KBM-7 (cell line): ENCODE measurements at regions of chr16 and their contacts with region 1.

Region 1: GRCh38 chr16:86519649-86520316 is 9.5 kb downstream of the FOXF1 start:
- DNase-seq: peak; percentile 56

Region 2: GRCh38 chr16:85799497-85800337 is 720.1 kb before region 1 on chr16 and contains the starts of genes COX4I1 and EMC8:
- in situ Hi-C with region 1: loop called (anchors 25 kb)
- DNase-seq: peak; percentile 91

Region 3: GRCh38 chr16:86072328-86073102 is 447.3 kb before region 1 on chr16:
- in situ Hi-C with region 1: loop called (anchors 10 kb)
- DNase-seq: peak; percentile 67